ENCODE measurements at regions of chr2 and their contacts with region 1.

Region 1: GRCh38 chr2:74653985-74654882 is at the start of gene SEMA4F:
- DNase-seq: peak; percentile 92
- H3K4me3 Mint-ChIP-seq: peak within 1 kb of the TSS; percentile 89
- H3K27ac Mint-ChIP-seq: peak within 1 kb of the TSS; percentile 4
- H3K4me1 Mint-ChIP-seq: peaks cover 12% of the 10 kb centered on the region
- H3K27me3 Mint-ChIP-seq: peaks cover 37% of the 10 kb centered on the region
- total RNA-seq, gene SEMA4F: 2.4 and 3.2 TPM in 2 replicates

Region 2: GRCh38 chr2:73176881-73177644 is 1477.2 kb before region 1 on chr2:
- intact Hi-C with region 1: loop called (anchors 10 kb)
- DNase-seq: peak; percentile 77
- H3K4me3 Mint-ChIP-seq: peak overlapping the region; percentile 84
- H3K27ac Mint-ChIP-seq: peak overlapping the region; percentile 50
- H3K4me1 Mint-ChIP-seq: peaks cover 26% of the 10 kb centered on the region
- H3K27me3 Mint-ChIP-seq: peaks cover 50% of the 10 kb centered on the region

Region 3: DNA sequence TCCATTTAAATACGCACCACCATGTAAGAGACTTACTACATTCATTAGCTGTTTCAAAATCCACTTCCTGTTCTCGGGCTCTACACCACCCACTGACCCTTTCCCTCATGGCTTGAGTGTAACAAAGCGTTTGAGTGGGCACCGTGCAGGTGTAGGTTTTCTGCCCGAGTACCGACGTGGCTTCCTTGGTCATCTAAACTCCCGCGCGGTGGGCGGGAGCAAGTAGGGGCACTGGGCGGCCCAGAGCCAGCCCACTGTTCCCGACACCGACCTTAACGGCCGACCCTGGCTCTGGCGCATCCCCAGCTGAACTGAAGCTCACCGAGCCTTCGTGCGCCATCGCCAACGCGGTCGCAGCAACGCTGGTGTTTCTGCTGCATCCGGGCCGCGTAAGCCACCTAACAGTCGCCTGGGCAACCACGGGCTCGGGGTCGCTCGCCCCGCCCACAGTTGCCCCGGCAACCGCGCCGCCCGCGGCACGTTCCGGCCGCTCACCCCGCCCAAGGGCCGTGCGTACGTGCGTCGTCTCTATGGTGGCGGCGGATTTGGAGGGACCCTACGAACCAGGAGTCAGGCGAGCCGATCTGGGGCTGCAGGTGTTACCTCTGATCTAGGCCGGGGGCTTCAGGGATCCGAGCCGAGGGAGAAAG is 232.9 kb before region 1 on chr2 and contains the starts of genes C2orf81 and WDR54:
- intact Hi-C with region 1: loop called (anchors 10 kb)
- DNase-seq: peak; percentile 95
- H3K4me3 Mint-ChIP-seq: peak within 1 kb of the TSS; percentile 98
- H3K27ac Mint-ChIP-seq: peak within 1 kb of the TSS; percentile 99
- H3K4me1 Mint-ChIP-seq: peaks cover 35% of the 10 kb centered on the region
- H3K27me3 Mint-ChIP-seq: no peaks in the 10 kb centered on the region
- total RNA-seq, gene C2orf81: 1.9 and 2.4 TPM in 2 replicates
- total RNA-seq, gene WDR54: 56.4 and 58.6 TPM in 2 replicates

Region 4: DNA sequence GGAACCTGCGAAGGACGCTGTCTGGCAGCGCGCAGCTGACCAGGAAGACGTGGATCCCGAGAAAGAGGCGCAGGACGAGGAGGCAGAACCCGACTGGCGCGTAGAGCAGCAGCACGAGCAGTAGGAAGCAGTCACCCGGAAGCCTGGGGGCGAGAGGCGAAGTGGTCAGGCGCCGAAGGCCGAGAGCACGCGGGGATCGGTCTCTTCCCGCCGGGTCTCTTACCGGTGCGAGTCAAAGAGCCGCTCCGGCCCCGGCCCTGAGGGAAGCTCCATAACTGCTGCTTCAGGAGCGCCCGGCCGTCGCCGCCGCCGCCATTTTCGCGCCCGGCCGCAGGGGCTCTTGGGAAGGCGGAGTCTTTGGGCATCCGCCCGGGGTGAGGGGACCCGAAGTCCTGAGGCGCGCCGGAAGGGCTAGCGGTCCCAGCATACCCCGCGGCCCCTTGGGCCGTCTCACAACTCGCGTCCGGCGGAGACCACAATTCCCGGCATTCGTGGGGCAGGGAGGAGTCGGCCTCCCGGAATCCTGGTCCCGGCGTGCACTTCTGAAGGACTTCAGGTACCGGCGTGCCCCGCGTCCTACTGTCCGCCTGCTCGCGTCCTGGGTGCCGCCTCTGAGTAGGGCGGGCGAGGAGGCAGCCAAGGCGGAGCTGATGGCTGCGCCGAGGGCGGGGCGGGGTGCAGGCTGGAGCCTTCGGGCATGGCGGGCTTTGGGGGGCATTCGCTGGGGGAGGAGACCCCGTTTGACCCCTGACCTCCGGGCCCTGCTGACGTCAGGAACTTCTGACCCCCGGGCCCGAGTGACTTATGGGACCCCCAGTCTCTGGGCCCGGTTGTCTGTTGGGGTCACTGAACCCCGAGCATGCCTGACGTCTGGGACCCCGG is 124.6 kb before region 1 on chr2 and contains the starts of genes AUP1 and HTRA2:
- intact Hi-C with region 1: loop called (anchors 1 kb)
- DNase-seq: peak; percentile 90
- H3K4me3 Mint-ChIP-seq: peak within 1 kb of the TSS; percentile 99
- H3K27ac Mint-ChIP-seq: peak within 1 kb of the TSS; percentile 95
- H3K4me1 Mint-ChIP-seq: peaks cover 49% of the 10 kb centered on the region
- H3K27me3 Mint-ChIP-seq: no peaks in the 10 kb centered on the region
- total RNA-seq, gene AUP1: 178 and 187 TPM in 2 replicates
- total RNA-seq, gene HTRA2: 57.0 and 57.3 TPM in 2 replicates

Region 5: DNA sequence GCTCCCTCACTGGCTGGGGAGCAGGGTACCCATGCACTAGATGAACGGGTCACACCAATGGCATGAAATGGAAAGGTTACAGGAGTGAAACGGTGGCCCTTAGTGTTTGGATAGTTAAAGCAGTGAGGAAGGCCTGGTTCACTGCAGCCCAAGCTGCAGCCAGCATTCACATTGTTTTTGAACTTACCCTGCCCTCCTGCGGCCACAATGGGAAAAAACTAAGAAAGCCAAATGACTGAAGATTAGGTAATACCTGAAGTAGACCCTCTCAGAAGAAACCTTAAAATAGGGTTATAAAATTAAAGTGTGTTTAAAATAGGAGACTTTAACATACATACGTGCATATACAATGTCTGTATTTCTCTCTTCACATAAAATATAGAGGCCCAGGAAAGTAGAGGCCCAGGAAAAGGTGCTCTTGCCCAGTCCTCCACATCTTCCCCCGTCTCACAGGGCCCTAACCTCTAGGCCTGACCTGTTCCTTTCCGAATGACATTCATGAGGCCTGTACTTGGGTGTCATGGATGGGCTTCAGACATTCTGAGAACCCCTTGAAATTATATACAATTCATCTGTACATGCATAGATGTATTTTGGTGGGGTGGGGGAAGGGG is 66.5 kb before region 1 on chr2:
- intact Hi-C with region 1: loop called (anchors 5 kb)
- DNase-seq: peak; percentile 56
- H3K4me3 Mint-ChIP-seq: no peak overlapping the region
- H3K27ac Mint-ChIP-seq: peak overlapping the region; percentile 12
- H3K4me1 Mint-ChIP-seq: peaks cover 37% of the 10 kb centered on the region
- H3K27me3 Mint-ChIP-seq: peaks cover 17% of the 10 kb centered on the region

Region 6: GRCh38 chr2:74958274-74959105 is 304.3 kb after region 1 on chr2 and contains the start of gene POLE4:
- intact Hi-C with region 1: loop called (anchors 5 kb)
- DNase-seq: peak; percentile 89
- H3K4me3 Mint-ChIP-seq: peak within 1 kb of the TSS; percentile 85
- H3K27ac Mint-ChIP-seq: peak within 1 kb of the TSS; percentile 89
- H3K4me1 Mint-ChIP-seq: peaks cover 66% of the 10 kb centered on the region
- H3K27me3 Mint-ChIP-seq: no peaks in the 10 kb centered on the region
- total RNA-seq, gene POLE4: 48.4 and 56.7 TPM in 2 replicates